ENCODE measurements at regions of chr3 and their contacts with region 1.

Region 1: DNA sequence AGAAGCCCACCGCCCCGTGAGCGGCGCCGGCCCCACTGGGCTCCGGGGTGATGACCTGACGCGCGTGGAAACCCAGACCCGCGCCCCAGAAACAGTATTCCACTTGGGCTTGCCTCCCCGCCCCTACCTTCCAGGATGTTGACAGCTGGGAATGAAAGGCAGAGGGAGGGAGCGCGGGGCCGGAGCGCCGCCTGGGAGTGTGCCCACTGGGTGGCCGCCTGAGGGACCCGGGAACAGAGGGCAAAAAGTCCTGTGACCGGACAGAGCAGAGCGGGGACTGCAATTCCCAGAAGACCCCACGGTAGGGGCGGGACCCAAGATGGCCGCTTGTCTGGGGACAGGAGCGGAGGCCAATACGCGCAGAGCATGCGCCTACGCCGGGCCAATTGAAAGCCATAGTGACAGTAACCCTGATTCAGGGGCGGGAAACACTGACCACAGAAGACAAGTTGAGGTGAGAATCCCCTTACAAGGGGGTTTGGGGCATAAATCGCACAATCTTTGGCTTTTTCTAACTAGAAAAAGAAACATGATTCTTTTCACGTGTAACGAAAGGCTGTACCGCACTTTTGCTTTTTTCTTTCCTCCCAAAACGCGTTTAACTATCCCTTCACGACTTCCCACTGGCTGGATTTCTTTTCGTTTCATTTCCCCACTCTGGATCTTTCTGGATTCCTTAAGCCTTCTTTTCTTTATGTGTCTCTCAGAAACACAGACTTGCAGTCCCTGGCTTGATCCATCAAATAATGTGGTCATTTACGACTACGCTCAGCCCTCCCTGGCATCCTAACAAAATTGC is at the start of gene FHIT:
- DNase-seq: peak; percentile 81 to 95
- H3K4me3 ChIP-seq: peak within 1 kb of the TSS; percentile 65
- H3K27ac ChIP-seq: peak within 1 kb of the TSS; percentile 29
- H3K4me1 ChIP-seq: peaks cover 4% of the 10 kb centered on the region; the same call in 1 of the 2 replicates
- H3K27me3 ChIP-seq: no peaks in the 10 kb centered on the region
- CTCF ChIP-seq: no peak
- total RNA-seq, gene FHIT: 7.6 and 9.8 TPM in 2 replicates

Region 2: DNA sequence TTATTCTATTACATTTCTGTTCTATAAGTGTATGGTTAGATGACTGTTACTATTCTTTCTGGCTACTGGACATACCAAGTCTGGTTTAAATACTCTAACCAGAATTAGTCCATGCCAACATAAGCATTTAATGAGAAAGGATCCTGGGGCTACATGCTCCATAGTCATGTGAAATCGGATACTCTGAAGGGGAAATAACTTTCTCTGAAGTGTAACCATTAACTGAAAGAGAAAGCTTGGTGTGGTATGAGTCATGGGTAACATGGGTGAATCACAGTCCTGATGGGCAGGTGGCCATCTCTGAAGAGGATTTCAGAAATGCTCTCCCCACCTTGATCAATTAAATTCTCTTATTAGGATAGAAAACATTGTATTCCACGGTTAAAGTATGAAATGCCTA is 69.5 kb before region 1 on chr3:
- CTCF ChIA-PET with region 1: no interaction called
- POLR2A ChIA-PET with region 1: no interaction called
- intact Hi-C with region 1: loop called (anchors 2 kb)
- DNase-seq: peak; percentile 15 to 64
- H3K4me3 ChIP-seq: no peak overlapping the region
- H3K27ac ChIP-seq: no peak overlapping the region
- H3K4me1 ChIP-seq: no peaks in the 10 kb centered on the region; the same call in 1 of the 2 replicates
- H3K27me3 ChIP-seq: no peaks in the 10 kb centered on the region
- CTCF ChIP-seq: no peak